Endothelial cell of umbilical vein (primary cell): ENCODE measurements at regions of chr14 and their contacts with region 1.

Region 1: GRCh38 chr14:76761136-76761959 is at the start of gene VASH1:
- DNase-seq: peak; percentile 75
- H3K4me3 ChIP-seq: peak within 1 kb of the TSS; percentile 81 to 98 (median 90)
- H3K27ac ChIP-seq: peak within 1 kb of the TSS; percentile 8
- H3K4me1 ChIP-seq: peaks cover 30% of the 10 kb centered on the region
- H3K27me3 ChIP-seq: peaks cover 2 to 6% of the 10 kb centered on the region in 2 experiments
- CTCF ChIP-seq: no peak
- POLR2A ChIP-seq: peak; percentile 82
- total RNA-seq, gene VASH1: 168 and 246 TPM in 2 replicates

Region 2: DNA sequence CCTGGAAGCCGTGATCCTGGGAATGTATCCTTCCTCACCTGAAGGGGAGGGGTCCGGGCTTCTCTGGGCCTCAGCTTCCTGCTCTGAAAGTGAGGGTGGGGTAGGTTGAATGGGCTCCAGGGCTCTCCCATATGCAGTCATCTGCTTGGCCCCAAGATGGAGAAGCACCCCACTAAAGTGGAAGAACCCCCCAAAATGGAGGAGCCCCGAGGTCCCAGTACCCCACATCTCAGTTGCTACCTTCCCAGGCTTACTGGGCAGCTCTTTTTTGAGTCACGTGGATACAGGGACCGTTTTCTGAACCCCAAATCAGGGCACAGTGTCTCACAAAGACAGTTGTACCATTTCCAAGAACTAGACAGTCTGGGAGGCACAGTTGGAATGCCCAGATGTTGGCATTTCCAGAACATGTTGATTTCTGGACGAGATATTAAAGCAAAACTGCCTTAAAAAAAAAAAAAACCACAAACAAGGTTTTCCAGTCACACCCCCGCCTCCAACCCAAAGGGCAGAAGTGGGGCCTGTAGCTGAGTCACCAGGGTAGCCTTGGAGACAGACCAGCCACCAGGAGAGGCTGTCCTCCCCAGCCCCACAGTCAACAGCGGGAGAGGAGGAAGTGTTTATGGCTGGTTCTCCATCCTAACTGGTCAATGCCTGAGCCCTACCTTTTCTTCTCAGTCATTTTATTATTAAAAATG is 12.0 kb after region 1 on chr14:
- CTCF ChIA-PET with region 1: interaction called, 9 read pairs
- POLR2A ChIA-PET with region 1: no interaction called
- dilution Hi-C with region 1: no loop called
- intact Hi-C with region 1: loop called (anchors 1 kb)
- DNase-seq: peak; percentile 89
- H3K4me3 ChIP-seq: no peak overlapping the region
- H3K27ac ChIP-seq: peak overlapping the region; percentile 92
- H3K4me1 ChIP-seq: peaks cover 27% of the 10 kb centered on the region
- H3K27me3 ChIP-seq: no peaks in the 10 kb centered on the region
- CTCF ChIP-seq: no peak
- POLR2A ChIP-seq: no peak